HCT116 (cell line): ENCODE measurements at regions of chr15 and their contacts with region 1.

Region 1: GRCh38 chr15:101008158-101009139 is 89.3 kb downstream of the LRRK1 start:
- DNase-seq: peak; percentile 72
- ATAC-seq: peak; percentile 91
- H3K4me3 ChIP-seq: peak overlapping the region; percentile 43 to 58
- H3K27ac ChIP-seq: 0 out of 2 replicates have a peak overlapping the region, but pooled peaks have one; percentile 24
- H3K4me1 ChIP-seq: peaks cover 11 to 25% of the 10 kb centered on the region in 2 experiments; a peak in 3 of 4 replicates
- H3K27me3 ChIP-seq: no peaks in the 10 kb centered on the region
- CTCF ChIP-seq: peak; percentile 81 to 99 (median 89)
- POLR2A ChIP-seq: no peak
- RAD21 ChIP-seq: peak; percentile 22; the same call in 1 of the 2 replicates

Region 2: GRCh38 chr15:100349696-100350433 is 658.6 kb before region 1 on chr15:
- CTCF ChIA-PET with region 1: interaction called, 40 read pairs
- POLR2A ChIA-PET with region 1: no interaction called
- RAD21 ChIA-PET with region 1: no interaction called
- intact Hi-C with region 1: loop called (anchors 1 kb)
- DNase-seq: peak; percentile 70
- ATAC-seq: peak; percentile 94
- H3K4me3 ChIP-seq: peak overlapping the region; percentile 58 to 72
- H3K27ac ChIP-seq: peak overlapping the region; percentile 27; the same call in 1 of the 2 replicates
- H3K4me1 ChIP-seq: peaks cover 0 to 19% of the 10 kb centered on the region in 2 experiments; a peak in 1 of 4 replicates
- H3K27me3 ChIP-seq: no peaks in the 10 kb centered on the region
- CTCF ChIP-seq: peak; percentile 80 to 98 (median 81)
- POLR2A ChIP-seq: no peak
- RAD21 ChIP-seq: peak; percentile 59

Region 3: GRCh38 chr15:100627789-100628395 is 380.6 kb before region 1 on chr15:
- CTCF ChIA-PET with region 1: interaction called, 17 read pairs
- POLR2A ChIA-PET with region 1: no interaction called
- RAD21 ChIA-PET with region 1: no interaction called
- intact Hi-C with region 1: loop called (anchors 1 kb)
- DNase-seq: peak; percentile 69
- ATAC-seq: peak; percentile 92
- H3K4me3 ChIP-seq: no peak overlapping the region
- H3K27ac ChIP-seq: no peak overlapping the region
- H3K4me1 ChIP-seq: no peaks in the 10 kb centered on the region
- H3K27me3 ChIP-seq: no peaks in the 10 kb centered on the region
- CTCF ChIP-seq: peak; percentile 69 to 84 (median 73)
- POLR2A ChIP-seq: no peak
- RAD21 ChIP-seq: peak; percentile 86

Region 4: GRCh38 chr15:100759698-100760356 is 248.6 kb before region 1 on chr15:
- CTCF ChIA-PET with region 1: interaction called, 3 read pairs
- POLR2A ChIA-PET with region 1: no interaction called
- RAD21 ChIA-PET with region 1: no interaction called
- intact Hi-C with region 1: loop called (anchors 10 kb)
- DNase-seq: peak; percentile 51
- ATAC-seq: peak; percentile 88
- H3K4me3 ChIP-seq: peak overlapping the region; percentile 17 to 42
- H3K27ac ChIP-seq: peak overlapping the region; percentile 50
- H3K4me1 ChIP-seq: peaks cover 29 to 73% of the 10 kb centered on the region in 2 experiments
- H3K27me3 ChIP-seq: no peaks in the 10 kb centered on the region
- CTCF ChIP-seq: no peak
- POLR2A ChIP-seq: no peak
- RAD21 ChIP-seq: no peak

Region 5: GRCh38 chr15:100879464-100880138 is 128.8 kb before region 1 on chr15 and contains the start of gene ALDH1A3:
- CTCF ChIA-PET with region 1: interaction called, 5 read pairs
- POLR2A ChIA-PET with region 1: no interaction called
- RAD21 ChIA-PET with region 1: no interaction called
- intact Hi-C with region 1: loop called (anchors 2 kb)
- DNase-seq: peak; percentile 39
- ATAC-seq: peak; percentile 82
- H3K4me3 ChIP-seq: peak within 1 kb of the TSS; percentile 77 to 89
- H3K27ac ChIP-seq: peak within 1 kb of the TSS; percentile 78
- H3K4me1 ChIP-seq: peaks cover 28 to 57% of the 10 kb centered on the region in 2 experiments
- H3K27me3 ChIP-seq: no peaks in the 10 kb centered on the region
- CTCF ChIP-seq: no peak
- POLR2A ChIP-seq: peak; percentile 63
- RAD21 ChIP-seq: no peak
- total RNA-seq, gene ALDH1A3: 248 TPM

Region 6: DNA sequence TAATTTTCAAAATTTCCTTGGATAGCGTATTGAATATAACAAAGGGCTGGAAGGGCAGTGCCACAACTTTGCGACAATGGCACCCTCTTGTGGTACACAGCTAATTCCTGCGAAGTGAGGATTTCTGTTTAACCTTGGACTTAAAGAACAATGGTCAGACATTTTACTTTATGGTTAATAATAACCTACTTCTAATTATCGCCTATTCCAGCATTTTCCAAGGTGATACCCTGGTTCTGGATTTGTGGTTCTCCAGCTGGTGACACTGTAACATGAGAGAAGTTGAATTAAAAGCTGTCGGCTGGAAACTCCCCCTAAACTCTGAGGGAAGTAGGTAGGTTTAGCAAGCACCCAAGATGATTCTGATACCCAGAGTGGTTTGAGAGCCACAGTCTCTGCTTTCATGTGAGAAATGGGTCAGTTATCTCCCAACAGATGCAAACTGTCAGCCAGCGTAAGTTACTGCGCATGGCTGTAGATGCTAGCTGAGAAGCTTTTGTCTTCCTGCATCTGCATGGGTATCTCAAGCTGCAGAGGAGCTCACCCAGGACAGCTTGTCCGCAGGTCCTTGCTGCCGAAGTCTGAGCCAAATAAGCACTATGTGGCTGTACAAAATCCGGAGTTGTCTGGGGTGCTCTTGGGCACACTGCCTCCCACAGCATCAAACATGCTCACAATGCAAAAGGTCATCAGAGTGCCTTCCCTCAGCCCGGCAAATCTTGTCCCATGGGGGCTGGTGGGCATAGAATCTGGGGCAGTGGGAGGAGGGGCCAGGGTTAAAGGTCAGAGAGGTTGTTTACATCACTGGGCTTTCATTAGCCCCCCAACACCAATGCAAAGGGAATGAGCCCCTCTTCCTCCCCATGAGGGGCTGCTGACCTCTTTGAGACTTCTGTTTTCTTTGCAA is 250.0 kb after region 1 on chr15:
- CTCF ChIA-PET with region 1: interaction called, 19 read pairs
- POLR2A ChIA-PET with region 1: interaction called, 3 read pairs
- RAD21 ChIA-PET with region 1: no interaction called
- intact Hi-C with region 1: no loop called
- DNase-seq: peak; percentile 51
- ATAC-seq: peak; percentile 88
- H3K4me3 ChIP-seq: no peak overlapping the region
- H3K27ac ChIP-seq: no peak overlapping the region
- H3K4me1 ChIP-seq: no peaks in the 10 kb centered on the region
- H3K27me3 ChIP-seq: no peaks in the 10 kb centered on the region
- CTCF ChIP-seq: peak; percentile 79 to 97 (median 96)
- POLR2A ChIP-seq: no peak
- RAD21 ChIP-seq: peak; percentile 97